PC-9 (cell line): ENCODE measurements at regions of chr3 and their contacts with region 1.

Region 1: GRCh38 chr3:189355481-189356201 is 183.9 kb downstream of the TPRG1 start:
- DNase-seq: peak in 1 of 2 experiments; percentile 44
- H3K4me3 ChIP-seq: no peak overlapping the region
- H3K27ac ChIP-seq: peak overlapping the region; percentile 57
- H3K4me1 ChIP-seq: peaks cover 33% of the 10 kb centered on the region
- H3K27me3 ChIP-seq: no peaks in the 10 kb centered on the region
- CTCF ChIP-seq: no peak

Region 2: GRCh38 chr3:189304446-189305351 is 50.9 kb before region 1 on chr3:
- CTCF ChIA-PET with region 1: no interaction called
- POLR2A ChIA-PET with region 1: interaction called, 6 read pairs
- intact Hi-C with region 1: loop called (anchors 2 kb)
- DNase-seq: peak; percentile 93 to 99
- H3K4me3 ChIP-seq: peak overlapping the region; percentile 27; the same call in 1 of the 2 replicates
- H3K27ac ChIP-seq: peak overlapping the region; percentile 85
- H3K4me1 ChIP-seq: peaks cover 44% of the 10 kb centered on the region
- H3K27me3 ChIP-seq: no peaks in the 10 kb centered on the region
- CTCF ChIP-seq: no peak

Region 3: GRCh38 chr3:189394599-189395121 is 39.0 kb after region 1 on chr3:
- CTCF ChIA-PET with region 1: interaction called, 3 read pairs
- POLR2A ChIA-PET with region 1: no interaction called
- intact Hi-C with region 1: loop called (anchors 1 kb)
- DNase-seq: no peak
- H3K4me3 ChIP-seq: no peak overlapping the region
- H3K27ac ChIP-seq: peak overlapping the region; percentile 89
- H3K4me1 ChIP-seq: peaks cover 36% of the 10 kb centered on the region
- H3K27me3 ChIP-seq: no peaks in the 10 kb centered on the region
- CTCF ChIP-seq: no peak

Region 4: DNA sequence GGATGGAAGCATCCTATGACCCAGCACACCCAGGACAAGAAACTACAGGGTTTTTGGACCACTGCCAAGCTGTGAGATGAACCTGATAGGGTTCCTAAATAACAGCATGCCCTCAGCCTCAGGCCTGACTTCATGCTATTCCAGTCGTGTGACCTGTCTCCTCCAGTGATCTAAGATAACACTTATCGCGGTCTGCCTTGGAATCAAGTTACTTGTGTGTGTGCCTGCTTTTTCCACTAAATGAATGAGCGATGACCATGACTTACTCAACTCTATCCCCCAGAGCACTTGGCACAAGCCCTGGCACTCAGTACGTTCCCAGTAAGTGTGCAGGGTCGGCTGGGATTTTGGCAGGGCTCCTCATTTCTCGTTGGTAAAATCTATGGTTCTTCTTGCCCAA is 102.9 kb after region 1 on chr3:
- CTCF ChIA-PET with region 1: no interaction called
- POLR2A ChIA-PET with region 1: no interaction called
- intact Hi-C with region 1: no loop called
- DNase-seq: peak; percentile 84 to 86
- H3K4me3 ChIP-seq: no peak overlapping the region
- H3K27ac ChIP-seq: no peak overlapping the region
- H3K4me1 ChIP-seq: peaks cover 11% of the 10 kb centered on the region
- H3K27me3 ChIP-seq: no peaks in the 10 kb centered on the region
- CTCF ChIP-seq: no peak

Region 5: DNA sequence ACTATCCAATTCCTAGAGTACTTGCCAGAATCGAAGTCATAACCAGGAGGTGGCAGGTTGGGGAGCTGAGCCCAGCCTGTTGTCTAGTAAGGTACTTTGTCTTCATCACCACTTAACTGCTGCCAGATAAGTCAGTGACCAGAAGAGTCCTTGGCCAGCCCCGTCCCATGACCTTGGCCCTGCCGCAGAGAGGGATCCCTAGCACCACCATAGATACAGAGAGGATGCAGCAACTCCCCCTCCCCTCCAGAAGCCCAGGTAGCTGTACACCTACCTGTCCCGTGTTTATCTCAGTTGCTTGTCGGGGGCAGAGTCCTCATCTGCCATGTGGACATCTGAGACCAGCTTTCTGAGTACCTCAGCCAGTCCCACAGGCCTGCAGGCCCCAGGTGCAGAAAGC is 122.0 kb after region 1 on chr3:
- CTCF ChIA-PET with region 1: no interaction called
- POLR2A ChIA-PET with region 1: interaction called, 25 read pairs
- intact Hi-C with region 1: no loop called
- DNase-seq: no peak
- H3K4me3 ChIP-seq: no peak overlapping the region
- H3K27ac ChIP-seq: no peak overlapping the region
- H3K4me1 ChIP-seq: no peaks in the 10 kb centered on the region
- H3K27me3 ChIP-seq: no peaks in the 10 kb centered on the region
- CTCF ChIP-seq: no peak

Region 6: GRCh38 chr3:189530822-189531221 is 175.2 kb after region 1 on chr3:
- CTCF ChIA-PET with region 1: no interaction called
- POLR2A ChIA-PET with region 1: interaction called, 14 read pairs
- intact Hi-C with region 1: no loop called
- DNase-seq: no peak
- H3K4me3 ChIP-seq: no peak overlapping the region
- H3K27ac ChIP-seq: no peak overlapping the region
- H3K4me1 ChIP-seq: no peaks in the 10 kb centered on the region
- H3K27me3 ChIP-seq: no peaks in the 10 kb centered on the region
- CTCF ChIP-seq: no peak